ENCODE measurements at regions of chr12 and their contacts with region 1.

Region 1: GRCh38 chr12:110600254-110600653 is 13.7 kb upstream of the TCTN1 start:
- DNase-seq: no peak

Region 2: DNA sequence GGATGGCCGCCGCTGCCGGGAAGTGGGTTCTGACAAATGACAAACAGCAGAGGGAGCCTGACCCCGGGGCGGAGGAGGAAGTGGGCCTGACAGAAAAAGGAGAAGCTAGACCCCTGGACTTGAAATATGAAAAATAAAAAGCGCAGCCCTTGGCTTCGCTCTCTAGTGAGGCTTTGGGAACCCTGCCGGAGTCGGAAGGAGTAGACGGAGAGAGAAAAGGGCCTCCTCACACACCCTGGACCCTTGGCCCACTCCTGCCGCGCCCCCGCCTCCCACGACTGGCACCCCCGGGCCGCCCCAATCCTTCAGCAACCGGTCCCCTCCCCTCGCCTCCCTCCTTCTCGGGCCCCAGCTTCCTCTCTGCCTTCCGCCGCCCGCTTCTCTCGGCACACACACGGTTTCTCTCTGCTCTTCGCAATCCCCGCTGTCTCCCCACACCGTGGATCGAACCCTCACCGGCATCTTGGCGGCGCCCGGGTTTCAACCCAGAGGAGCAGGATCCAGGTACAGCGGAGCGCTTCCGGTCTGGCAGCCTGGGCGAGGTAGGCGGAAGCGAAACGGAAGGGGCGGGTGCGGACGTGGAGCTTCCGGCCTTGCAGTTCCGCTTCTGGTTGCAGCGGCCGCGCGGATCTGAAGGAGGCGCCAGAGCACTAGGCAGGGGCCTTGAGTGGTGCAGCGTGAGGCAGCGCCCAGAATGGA is 150.3 kb before region 1 on chr12 and contains the start of gene ARPC3:
- intact Hi-C with region 1: loop called (anchors 2 kb)
- DNase-seq: peak; percentile 98
- total RNA-seq, gene ARPC3: 102 TPM

Region 3: DNA sequence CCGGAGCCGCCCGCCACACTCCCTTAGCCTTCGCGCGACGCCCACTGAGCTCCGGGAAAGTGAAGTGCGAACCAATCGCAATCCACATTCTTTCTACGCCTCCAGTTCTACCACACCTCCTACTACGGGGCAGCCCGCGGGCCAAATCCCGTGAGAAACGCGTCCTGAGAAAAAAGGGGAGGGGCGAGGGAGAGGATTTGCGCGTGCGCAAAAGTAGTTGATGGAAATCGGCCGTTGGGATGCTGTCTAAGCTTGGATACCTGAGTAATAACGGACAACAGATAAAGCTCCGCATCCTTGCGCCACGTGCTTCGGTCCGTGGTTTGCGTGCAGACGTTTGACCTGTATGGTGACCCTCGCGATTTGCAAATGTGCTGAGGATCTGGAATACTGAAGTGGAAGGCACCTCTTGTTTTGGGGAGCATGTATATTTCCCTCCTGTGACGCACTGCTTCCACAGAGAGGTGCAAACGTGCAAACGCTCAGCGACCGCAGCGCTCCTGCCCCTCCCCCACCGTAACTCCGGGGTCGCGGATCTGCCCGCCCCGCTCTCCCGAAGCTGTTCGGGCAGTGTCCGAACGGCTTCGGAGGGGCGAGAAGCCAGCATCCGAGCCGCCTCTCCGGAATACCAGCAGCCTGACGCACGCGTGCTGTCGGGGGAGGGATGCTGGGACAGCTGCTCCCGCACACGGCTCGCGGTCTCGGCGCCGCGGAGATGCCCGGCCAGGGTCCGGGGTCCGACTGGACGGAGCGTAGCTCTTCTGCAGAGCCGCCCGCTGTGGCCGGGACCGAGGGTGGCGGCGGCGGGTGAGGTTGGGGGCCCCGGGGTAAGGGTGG is 131.8 kb before region 1 on chr12 and contains the starts of genes FAM216A and GPN3:
- intact Hi-C with region 1: loop called (anchors 5 kb)
- DNase-seq: peak; percentile 98
- total RNA-seq, gene FAM216A: 4.7 TPM
- total RNA-seq, gene GPN3: 27.1 TPM

Region 4: DNA sequence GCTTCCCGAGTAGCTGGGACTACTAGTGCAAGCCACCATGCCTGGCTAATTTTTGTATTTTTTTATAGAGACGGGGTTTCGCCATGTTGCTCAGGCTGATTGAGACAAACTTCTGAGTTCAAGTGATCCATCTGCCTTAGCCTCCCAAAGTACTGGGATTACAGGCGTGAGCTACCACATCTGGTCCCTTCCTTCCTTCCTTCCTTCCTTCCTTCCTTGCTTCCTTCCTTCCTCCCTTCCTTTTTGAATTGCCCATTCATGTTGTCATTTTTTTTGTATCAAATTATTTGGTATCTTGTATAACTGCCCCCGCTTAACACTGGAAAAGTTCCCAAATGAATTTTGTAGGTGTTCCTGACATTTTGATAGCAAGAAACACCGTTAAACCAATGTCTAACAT is 86.4 kb before region 1 on chr12:
- intact Hi-C with region 1: loop called (anchors 2 kb)
- DNase-seq: no peak

Region 5: GRCh38 chr12:110549716-110550115 is 50.5 kb before region 1 on chr12:
- intact Hi-C with region 1: loop called (anchors 5 kb)
- DNase-seq: no peak

Region 6: DNA sequence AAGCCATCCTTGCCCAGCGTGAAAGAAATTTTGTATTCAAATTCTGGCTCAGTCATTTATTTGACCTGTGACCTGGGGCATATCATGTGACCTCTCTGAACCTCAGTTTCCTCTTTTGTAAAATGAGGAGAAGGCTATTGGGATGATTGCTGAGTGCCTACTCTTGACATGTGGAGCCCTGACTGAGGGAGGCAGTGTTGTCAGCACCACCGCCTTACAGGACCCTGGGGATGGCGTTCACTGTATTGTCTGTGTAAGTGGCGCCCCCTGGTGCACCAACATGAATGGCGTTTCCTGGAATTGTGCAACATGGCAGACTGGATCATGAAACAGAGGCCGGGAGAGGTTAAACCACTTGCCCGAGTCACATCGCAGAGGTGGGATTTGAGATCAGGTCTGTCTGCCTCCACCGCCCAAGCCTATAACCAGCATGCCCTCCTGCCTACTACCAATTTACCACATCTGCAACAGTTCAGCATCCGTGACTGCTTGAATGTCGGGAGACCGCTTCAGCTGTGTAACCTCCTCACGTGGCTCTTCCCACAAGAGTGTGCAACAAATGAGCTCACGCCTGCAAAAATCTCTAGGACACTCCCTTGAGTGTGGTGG is 226.4 kb after region 1 on chr12:
- intact Hi-C with region 1: loop called (anchors 10 kb)
- DNase-seq: peak; percentile 85

Measured in cardiac septum (tissue), 1 donor.